Activated naive CD4-positive, alpha-beta T cell treated with anti-CD3 and anti-CD28 coated beads, Interleukin-2, amount 10 ng/mL, durations not matched to agents 7 days and 5 days (primary cell): ENCODE measurements at regions of chr20 and their contacts with region 1.

Region 1: DNA sequence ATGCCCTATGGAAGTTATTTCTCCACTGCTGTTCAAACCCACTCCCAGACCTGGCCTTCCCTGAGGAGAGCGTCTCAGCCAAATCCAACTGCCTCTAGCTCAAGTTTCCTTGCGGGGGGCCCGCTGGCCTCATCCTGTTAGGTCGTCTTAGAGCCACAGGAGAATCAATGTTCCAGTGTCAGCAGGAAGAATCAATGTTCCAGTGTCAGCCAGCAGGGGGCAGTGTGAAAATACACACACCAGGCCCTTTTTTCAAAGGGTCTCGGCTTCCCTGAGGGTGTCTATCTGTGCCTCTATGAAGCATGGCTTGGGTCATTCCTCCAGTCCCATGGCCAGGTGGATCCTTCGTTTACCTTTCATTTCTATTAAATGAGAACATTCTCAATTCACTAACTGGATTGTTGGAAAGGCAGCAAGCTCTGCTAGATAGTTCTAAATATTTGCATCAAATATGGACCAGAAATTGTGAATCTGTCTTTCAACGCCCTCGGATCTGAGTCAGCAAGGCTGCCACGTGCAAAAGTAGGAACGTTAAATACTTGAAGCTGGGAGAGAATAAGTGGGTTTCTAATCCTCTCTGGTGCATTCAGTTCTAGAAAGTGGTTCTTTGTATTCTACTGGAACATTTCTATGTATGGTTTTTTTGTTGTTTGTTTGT is 19.2 kb downstream of the PRND start:
- DNase-seq: peak; percentile 76
- H3K4me3 Mint-ChIP-seq: no peak overlapping the region
- H3K27ac Mint-ChIP-seq: no peak overlapping the region
- H3K4me1 Mint-ChIP-seq: peaks cover 6% of the 10 kb centered on the region
- H3K27me3 Mint-ChIP-seq: peaks cover 19% of the 10 kb centered on the region

Region 2: GRCh38 chr20:4726710-4727397 is 14.0 kb before region 1 on chr20:
- CTCF ChIA-PET with region 1: interaction called, 11 read pairs
- DNase-seq: peak; percentile 69
- H3K4me3 Mint-ChIP-seq: peak overlapping the region; percentile 50
- H3K27ac Mint-ChIP-seq: peak overlapping the region; percentile 35
- H3K4me1 Mint-ChIP-seq: peaks cover 16% of the 10 kb centered on the region
- H3K27me3 Mint-ChIP-seq: peaks cover 5% of the 10 kb centered on the region